Aorta (tissue), 5 donors: ENCODE measurements at regions of chr19 and their contacts with region 1.

Region 1: GRCh38 chr19:23758187-23759074 is at the start of gene ZNF681:
- DNase-seq: peak; percentile 93 to 95
- ATAC-seq: peak; percentile 93
- H3K4me3 ChIP-seq: peak within 1 kb of the TSS; percentile 64 to 80
- H3K27ac ChIP-seq: peak within 1 kb of the TSS in 1 of 2 donors; percentile 55
- H3K4me1 ChIP-seq: no peaks in the 10 kb centered on the region
- H3K27me3 ChIP-seq: no peaks in the 10 kb centered on the region
- total RNA-seq, gene ZNF681: 0.91 to 3.0 TPM

Region 2: GRCh38 chr19:23273590-23274413 is 484.6 kb before region 1 on chr19:
- intact Hi-C with region 1: loop called in 1 of 2 experiments (anchors 10 kb)
- DNase-seq: peak; percentile 94 to 97
- ATAC-seq: peak; percentile 98
- H3K4me3 ChIP-seq: peak overlapping the region; percentile 80 to 85
- H3K27ac ChIP-seq: peak overlapping the region in 1 of 2 donors; percentile 87
- H3K4me1 ChIP-seq: no peaks in the 10 kb centered on the region
- H3K27me3 ChIP-seq: no peaks in the 10 kb centered on the region

Region 3: DNA sequence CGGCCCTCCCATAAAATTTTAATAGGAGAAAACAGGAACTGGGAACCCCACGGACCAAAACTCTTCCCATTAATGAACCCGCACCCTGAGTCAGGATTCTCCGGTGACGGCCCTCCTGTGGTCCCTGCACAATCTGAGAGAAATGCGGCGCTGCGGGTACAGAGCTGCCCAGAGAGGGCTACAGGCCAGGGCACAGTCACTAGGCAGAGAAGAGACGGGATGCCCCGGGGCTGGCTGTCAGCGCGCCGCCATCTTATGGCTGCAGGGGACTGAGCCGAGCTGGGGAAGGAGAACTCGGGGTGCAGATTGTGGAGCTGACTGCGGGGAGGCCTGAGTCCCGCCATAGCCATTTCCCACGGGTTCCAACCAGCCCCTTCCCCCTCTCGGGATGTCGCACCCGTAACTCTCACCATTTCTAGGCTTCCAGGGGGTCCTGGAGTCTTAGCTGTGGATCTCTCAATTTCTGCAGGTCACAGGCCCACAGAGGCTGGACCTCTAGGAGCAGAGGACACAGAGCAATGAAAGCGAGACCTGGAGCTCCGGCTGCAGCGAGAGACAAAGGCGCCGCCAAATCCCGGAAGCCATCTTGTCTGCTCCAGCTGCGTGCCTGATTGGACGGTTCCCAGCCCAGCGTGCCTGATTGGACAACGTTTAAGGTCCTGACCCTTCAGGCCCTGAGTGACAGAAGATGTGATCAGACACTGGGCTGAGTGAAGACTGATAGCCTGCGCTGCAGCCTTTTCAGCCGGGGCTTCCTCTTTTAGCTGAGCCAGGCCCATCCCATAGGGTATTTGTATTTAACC is 71.6 kb before region 1 on chr19 and contains the start of gene ZNF675:
- intact Hi-C with region 1: loop called (anchors 2 to 5 kb)
- DNase-seq: peak; percentile 97
- ATAC-seq: peak; percentile 95
- H3K4me3 ChIP-seq: peak within 1 kb of the TSS; percentile 57 to 97
- H3K27ac ChIP-seq: peak within 1 kb of the TSS in 1 of 2 donors; percentile 98
- H3K4me1 ChIP-seq: no peaks in the 10 kb centered on the region
- H3K27me3 ChIP-seq: no peaks in the 10 kb centered on the region
- total RNA-seq, gene ZNF675: 8.5 to 9.0 TPM

Region 4: GRCh38 chr19:23795462-23795861 is 37.0 kb after region 1 on chr19:
- intact Hi-C with region 1: no loop called
- DNase-seq: no peak
- ATAC-seq: no peak
- H3K4me3 ChIP-seq: no peak overlapping the region
- H3K27ac ChIP-seq: no peak overlapping the region
- H3K4me1 ChIP-seq: no peaks in the 10 kb centered on the region
- H3K27me3 ChIP-seq: no peaks in the 10 kb centered on the region

Region 5: GRCh38 chr19:23876261-23876660 is 117.8 kb after region 1 on chr19:
- intact Hi-C with region 1: no loop called
- DNase-seq: no peak
- ATAC-seq: no peak
- H3K4me3 ChIP-seq: no peak overlapping the region
- H3K27ac ChIP-seq: no peak overlapping the region
- H3K4me1 ChIP-seq: no peaks in the 10 kb centered on the region
- H3K27me3 ChIP-seq: no peaks in the 10 kb centered on the region

Region 6: DNA sequence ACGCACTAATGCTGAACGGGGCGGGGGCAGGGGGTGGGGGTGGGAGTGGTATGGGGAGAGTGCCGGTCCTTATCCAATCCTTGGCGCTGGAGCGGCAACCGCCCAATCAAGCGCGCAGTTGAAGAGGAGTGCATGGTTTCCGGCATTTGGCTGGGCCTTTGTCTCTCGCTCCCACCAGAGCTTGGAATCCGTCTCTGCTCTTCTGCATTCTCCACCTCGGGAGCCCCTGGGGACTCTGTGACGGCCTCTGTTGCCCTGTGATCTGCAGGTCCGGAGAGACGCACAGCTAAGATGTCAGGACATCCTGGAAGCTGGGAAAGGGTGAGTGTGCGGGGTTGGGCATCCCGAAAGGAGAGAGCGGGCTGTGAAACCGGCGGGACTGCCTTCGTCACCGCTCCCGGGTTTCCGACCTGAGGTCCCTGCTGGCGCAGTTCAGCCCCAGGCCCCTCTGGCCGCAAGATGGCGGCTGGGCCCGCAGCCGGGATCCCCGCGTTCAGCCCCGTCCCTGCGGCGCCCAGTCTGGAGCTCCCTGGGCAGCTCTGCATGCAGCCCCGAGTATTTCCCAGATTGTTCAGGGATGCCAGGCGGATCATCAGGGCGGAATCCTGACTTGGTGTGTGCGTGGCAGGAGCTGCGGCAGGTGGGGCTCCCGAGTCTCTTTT is 275.0 kb after region 1 on chr19:
- intact Hi-C with region 1: loop called (anchors 2 to 5 kb)
- DNase-seq: peak; percentile 94 to 95
- ATAC-seq: peak; percentile 98
- H3K4me3 ChIP-seq: peak overlapping the region; percentile 75 to 88
- H3K27ac ChIP-seq: peak overlapping the region; percentile 64 to 71
- H3K4me1 ChIP-seq: peaks cover 0 to 2% of the 10 kb centered on the region in 2 donors
- H3K27me3 ChIP-seq: no peaks in the 10 kb centered on the region